Vagina (tissue), 2 donors: ENCODE measurements at regions of chr5 and their contacts with region 1.

Region 1: GRCh38 chr5:29252390-29252789 is 1941.1 kb upstream of the CDH6 start:
- DNase-seq: no peak
- H3K4me3 ChIP-seq: no peak overlapping the region
- H3K27ac ChIP-seq: no peak overlapping the region
- H3K4me1 ChIP-seq: no peaks in the 10 kb centered on the region
- H3K27me3 ChIP-seq: no peaks in the 10 kb centered on the region
- CTCF ChIP-seq: no peak
- POLR2A ChIP-seq: no peak

Region 2: DNA sequence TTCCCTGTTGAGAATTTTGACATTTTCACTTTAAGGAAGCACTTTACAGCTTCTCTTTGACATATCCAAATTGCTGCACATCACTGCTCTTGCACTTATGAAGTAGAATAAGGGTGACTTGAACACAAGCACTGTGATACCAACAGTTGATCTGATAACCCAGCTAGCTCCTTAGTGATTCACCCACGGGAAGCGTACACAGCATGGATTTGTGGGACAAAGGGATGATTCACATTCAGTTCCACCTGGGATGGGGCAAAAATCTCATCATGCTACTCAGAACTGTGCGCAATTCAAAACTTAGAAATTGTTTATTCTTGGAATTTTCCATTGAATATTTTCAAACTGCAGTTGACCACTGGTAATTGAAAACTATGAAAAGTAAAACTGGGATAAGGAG is 648.5 kb before region 1 on chr5:
- intact Hi-C with region 1: loop called (anchors 5 kb)
- DNase-seq: no peak
- H3K4me3 ChIP-seq: no peak overlapping the region
- H3K27ac ChIP-seq: no peak overlapping the region
- H3K4me1 ChIP-seq: no peaks in the 10 kb centered on the region
- H3K27me3 ChIP-seq: no peaks in the 10 kb centered on the region
- CTCF ChIP-seq: no peak
- POLR2A ChIP-seq: no peak